ENCODE measurements at regions of chr10 and their contacts with region 1.

Region 1: DNA sequence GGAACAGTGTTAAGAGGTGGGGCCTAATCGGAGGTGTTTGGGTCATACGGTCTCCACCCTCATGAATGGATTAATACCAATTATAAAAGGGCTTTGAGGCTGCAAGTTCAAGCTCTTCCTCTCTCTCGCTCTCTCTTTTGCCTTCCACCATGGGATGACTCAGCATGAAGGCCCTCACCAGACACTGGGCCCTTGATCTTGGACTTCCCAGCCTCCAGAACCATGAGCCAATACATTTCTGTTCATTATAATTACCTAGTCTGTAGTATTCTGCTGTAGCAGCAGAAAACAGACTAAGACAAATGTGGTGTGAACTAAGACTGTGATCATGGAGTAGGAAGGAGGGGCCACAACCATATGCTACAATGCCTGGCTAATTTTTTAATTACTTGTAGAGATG is 7.7 kb downstream of the AIFM2 start:
- DNase-seq: no peak
- ATAC-seq: no peak
- H3K4me3 ChIP-seq: no peak overlapping the region
- H3K27ac ChIP-seq: no peak overlapping the region
- H3K4me1 ChIP-seq: no peaks in the 10 kb centered on the region
- H3K27me3 ChIP-seq: no peaks in the 10 kb centered on the region
- CTCF ChIP-seq: no peak

Region 2: DNA sequence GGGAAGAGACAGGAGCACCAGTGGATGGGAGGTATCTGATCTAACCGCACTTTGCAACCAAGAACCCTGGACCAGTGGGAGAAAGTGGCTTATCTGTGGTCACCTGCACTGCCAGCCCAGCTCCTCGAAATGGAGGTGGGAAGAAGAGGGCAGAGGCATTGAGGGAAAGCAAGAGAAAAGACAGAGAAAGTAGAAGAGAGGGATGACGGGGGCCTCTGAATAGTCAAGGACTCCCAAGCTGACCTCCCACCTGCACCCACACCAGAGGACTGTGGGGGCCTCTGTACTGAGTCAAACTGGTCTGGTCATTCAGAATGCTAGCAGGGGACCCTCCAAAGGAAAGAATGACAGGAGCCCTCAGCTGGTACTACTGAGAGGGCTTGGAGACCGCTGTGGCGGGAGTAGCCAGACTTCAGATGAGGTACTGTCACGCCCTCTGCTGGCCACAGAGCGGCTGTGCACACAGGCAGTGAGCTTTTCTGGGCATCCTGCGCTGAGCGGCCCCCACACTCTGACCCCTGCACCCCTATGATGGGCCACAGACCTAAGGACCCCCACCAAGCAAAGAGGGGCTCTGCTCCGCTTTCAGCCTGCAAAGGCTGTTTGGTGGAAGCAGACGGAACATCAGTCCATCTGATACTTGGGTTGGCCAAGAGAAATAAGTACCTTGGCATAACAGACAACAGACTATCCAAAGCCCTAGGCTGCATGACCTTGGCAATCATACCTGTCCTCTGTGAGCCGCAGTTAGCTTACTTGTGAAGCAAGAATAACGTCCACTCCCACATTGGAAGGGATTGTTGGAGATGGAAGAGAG is 210.3 kb before region 1 on chr10:
- CTCF ChIA-PET with region 1: no interaction called
- POLR2A ChIA-PET with region 1: no interaction called
- intact Hi-C with region 1: no loop called
- DNase-seq: peak; percentile 89
- ATAC-seq: peak; percentile 76
- H3K4me3 ChIP-seq: no peak overlapping the region
- H3K27ac ChIP-seq: no peak overlapping the region
- H3K4me1 ChIP-seq: no peaks in the 10 kb centered on the region
- H3K27me3 ChIP-seq: no peaks in the 10 kb centered on the region
- CTCF ChIP-seq: peak; percentile 100

Region 3: DNA sequence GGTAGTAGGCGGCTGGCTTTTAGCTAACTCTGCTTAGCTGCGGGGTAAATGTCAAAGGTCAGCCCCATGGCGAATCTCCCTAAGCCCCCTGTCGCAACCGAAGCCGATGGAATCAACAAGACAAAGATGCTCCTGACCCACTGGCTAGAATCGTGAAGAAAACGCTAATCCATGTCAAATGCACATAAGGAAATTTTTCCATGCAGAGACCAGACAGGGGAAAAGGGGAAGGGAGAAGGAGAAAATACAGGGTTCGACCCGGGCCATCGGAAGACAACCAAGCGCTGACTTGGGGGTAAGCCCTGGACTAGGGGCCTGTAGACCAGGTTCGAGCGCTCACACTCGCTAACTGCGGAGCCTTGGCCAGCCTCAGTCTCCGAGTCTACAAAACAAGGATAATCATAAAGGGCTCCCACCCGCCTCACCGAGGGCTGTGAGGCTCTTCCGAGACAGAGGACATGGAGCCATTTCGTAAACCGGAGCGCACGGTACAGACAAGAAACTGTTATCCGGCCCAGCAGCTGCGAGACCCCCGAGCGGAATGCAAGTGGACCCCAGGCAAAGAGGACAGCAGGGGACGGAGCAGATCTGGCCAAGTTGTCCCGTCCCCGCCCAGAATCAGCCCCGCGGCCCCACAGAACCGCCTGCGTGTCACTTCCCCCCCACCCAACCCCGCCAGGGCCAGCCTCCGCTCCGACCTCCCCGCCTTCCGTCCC is 44.9 kb after region 1 on chr10:
- CTCF ChIA-PET with region 1: no interaction called
- POLR2A ChIA-PET with region 1: no interaction called
- intact Hi-C with region 1: no loop called
- DNase-seq: no peak
- ATAC-seq: peak; percentile 21
- H3K4me3 ChIP-seq: peak overlapping the region; percentile 81
- H3K27ac ChIP-seq: peak overlapping the region; percentile 19
- H3K4me1 ChIP-seq: peaks cover 30% of the 10 kb centered on the region
- H3K27me3 ChIP-seq: no peaks in the 10 kb centered on the region
- CTCF ChIP-seq: no peak

Region 4: DNA sequence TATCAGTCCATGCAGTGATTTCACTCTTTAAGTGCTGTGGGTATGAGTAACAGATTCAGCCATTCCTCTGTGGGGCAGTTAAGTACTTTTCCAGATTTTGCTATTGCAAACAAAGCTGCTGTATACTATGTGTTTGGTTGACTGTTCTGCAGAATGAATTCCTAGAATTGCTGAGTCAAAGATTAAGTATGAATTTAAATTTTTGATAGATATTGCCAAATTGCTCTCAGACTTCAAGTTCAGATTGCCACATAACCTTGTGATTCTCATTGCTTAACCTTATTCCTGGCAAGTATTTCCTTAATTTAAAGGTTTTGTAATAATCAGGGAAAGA is 67.0 kb after region 1 on chr10:
- CTCF ChIA-PET with region 1: no interaction called
- POLR2A ChIA-PET with region 1: interaction called, 15 read pairs
- intact Hi-C with region 1: no loop called
- DNase-seq: peak; percentile 67
- ATAC-seq: peak; percentile 67
- H3K4me3 ChIP-seq: no peak overlapping the region
- H3K27ac ChIP-seq: no peak overlapping the region
- H3K4me1 ChIP-seq: peaks cover 18% of the 10 kb centered on the region
- H3K27me3 ChIP-seq: no peaks in the 10 kb centered on the region
- CTCF ChIP-seq: no peak

Measured in PC-3 (cell line).